ENCODE measurements at regions of chr10 and their contacts with region 1.

Region 1: DNA sequence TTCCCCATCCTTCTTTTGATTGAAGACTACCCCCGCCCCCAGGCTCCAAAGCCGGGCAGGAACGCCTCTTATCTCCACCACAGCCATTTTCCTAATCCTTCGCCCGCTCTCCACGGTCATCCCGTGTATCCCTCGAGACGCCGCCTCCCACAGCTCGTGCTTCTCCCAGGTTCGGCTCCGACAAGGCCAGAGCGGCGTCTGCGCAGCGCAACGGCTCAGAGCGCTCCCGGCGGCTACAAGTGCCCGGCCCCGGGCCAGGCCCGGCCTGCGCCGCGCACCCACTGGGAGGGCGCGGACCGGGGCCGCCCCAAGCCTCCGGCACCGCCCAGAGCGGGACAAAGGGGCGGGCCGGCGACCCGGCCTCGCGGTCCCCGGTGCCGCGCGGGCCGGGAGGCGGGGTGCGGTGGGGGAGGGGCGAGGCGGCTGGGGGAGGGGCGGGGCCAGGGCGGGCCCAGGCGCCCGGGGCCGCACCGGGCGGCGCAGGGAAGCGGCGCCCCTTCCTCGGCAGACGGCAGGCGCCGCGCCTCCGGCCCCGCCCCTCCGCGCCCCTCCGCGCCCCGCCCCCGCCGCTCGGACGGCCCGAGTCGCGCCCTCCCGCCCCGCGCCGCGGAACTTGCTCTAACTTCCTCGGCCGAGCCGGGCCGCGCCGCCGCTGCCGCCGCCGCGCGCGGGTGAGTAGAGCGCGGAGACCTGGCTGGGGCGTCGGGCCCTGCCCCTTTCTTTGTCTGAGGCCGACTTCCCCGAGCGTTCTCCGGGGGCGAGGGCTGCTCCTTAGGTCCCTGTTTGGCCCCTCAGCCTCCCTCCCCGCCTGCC is at the start of gene TSPAN14:
- DNase-seq: peak; percentile 83 to 90
- ATAC-seq: peak; percentile 86 to 95 (median 90)
- H3K4me3 ChIP-seq: peak within 1 kb of the TSS; percentile 76 to 99 (median 95)
- H3K27ac ChIP-seq: peak within 1 kb of the TSS; percentile 95 to 100 (median 100)
- H3K4me1 ChIP-seq: peaks cover 7 to 66% (median 48%) of the 10 kb centered on the region in 9 donors
- H3K27me3 ChIP-seq: no peaks in the 10 kb centered on the region
- CTCF ChIP-seq: no peak
- total RNA-seq, gene TSPAN14: 21.7 to 57.2 (median 27.6) TPM

Region 2: DNA sequence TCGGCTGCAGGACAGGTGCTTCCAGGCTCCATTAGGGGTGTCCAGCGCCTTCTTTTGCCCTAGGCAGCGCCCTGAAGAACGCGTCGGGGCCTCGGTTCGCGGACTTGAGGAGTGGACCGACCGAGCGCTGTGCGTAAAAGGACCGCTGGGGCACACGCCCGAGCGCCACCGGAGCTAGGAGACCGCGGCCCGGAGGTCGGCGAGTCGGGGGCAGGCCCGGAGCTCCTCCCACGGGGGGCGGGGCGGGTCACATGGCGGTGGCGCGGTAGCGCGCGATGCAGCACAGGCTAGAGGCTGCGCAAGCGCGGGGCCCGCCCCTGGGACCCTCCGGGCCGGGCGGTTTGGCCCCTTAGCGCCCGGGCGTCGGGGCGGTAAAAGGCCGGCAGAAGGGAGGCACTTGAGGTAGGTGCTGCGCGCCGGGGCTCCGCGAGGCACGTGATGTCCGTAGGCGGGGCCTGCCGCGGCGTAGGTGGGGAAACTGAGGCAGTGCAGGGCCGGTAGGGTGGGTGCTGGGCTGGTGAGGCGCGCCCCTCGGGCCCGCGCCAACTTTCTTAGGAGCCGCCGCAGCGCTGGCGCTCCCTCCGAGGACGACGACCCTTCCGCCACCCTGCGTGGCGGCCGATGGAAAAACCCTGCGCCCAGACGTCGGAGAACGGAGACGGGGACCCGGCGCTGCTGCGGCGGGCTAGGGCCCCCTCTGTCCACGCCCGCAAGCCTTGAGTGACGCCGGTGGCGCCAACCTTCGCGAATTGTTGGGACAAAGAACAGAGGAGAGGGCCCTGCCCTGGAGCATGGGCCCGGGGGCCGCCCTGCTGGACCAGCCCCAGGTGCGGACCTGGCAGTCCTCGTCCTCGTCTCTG is 45.4 kb before region 1 on chr10 and contains the start of gene PRXL2A:
- intact Hi-C with region 1: loop called in 2 of 10 experiments (anchors 5 kb)
- DNase-seq: peak; percentile 87 to 92
- ATAC-seq: peak; percentile 90 to 95 (median 94)
- H3K4me3 ChIP-seq: peak within 1 kb of the TSS; percentile 51 to 94 (median 84)
- H3K27ac ChIP-seq: peak within 1 kb of the TSS; percentile 59 to 93 (median 86)
- H3K4me1 ChIP-seq: peaks cover 5 to 71% (median 53%) of the 10 kb centered on the region in 9 donors
- H3K27me3 ChIP-seq: peaks cover 0 to 9% (median 0%) of the 10 kb centered on the region in 7 donors
- CTCF ChIP-seq: peak in 2 of 9 donors; percentile 8 to 14
- total RNA-seq, gene PRXL2A: 57.3 to 135 (median 84.3) TPM

Region 3: DNA sequence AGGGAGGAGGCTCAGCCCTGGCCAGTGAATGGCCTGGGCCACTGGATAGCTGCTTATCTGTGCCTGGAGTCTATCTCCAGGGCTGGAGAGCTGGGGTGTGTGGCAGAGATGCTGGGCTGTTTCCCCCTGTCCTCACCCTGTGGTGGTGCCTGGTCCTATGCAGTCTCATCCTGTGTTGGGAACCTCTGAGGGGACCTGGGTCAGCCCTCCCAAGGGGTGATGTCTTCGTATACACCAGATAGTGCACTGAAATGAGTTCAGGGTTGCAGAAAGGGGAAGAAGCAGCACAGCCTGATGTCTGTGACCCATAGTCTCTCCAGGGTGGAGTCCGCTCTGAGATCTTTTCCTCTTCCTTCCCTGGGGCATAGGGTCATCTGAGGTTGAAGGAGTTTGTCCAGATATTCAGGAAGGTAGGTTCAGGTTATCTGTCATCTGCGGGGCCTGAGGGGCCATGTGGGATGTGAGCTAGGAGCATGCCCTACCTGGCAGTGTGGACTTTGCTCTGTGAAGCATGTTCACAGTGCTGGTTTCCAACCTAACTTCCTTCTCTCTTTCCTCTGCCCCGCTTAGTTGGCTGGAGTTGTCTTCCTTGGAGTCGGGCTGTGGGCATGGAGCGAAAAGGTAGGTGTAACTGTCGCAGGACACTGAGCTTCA is 50.4 kb after region 1 on chr10:
- intact Hi-C with region 1: loop called in 4 of 10 experiments (anchors 2 to 5 kb)
- DNase-seq: no peak
- ATAC-seq: peak in 6 of 8 donors; percentile 5 to 29 (median 18)
- H3K4me3 ChIP-seq: peak overlapping the region in 1 of 10 donors; percentile 1
- H3K27ac ChIP-seq: peak overlapping the region; percentile 6 to 92 (median 79)
- H3K4me1 ChIP-seq: peaks cover 46 to 100% (median 98%) of the 10 kb centered on the region in 9 donors
- H3K27me3 ChIP-seq: no peaks in the 10 kb centered on the region
- CTCF ChIP-seq: no peak

Region 4: GRCh38 chr10:80612261-80612660 is 158.4 kb after region 1 on chr10:
- intact Hi-C with region 1: no loop called
- DNase-seq: no peak
- ATAC-seq: peak in 2 of 8 donors; percentile 47 to 75
- H3K4me3 ChIP-seq: no peak overlapping the region
- H3K27ac ChIP-seq: no peak overlapping the region
- H3K4me1 ChIP-seq: peaks cover 0 to 5% (median 0%) of the 10 kb centered on the region in 9 donors
- H3K27me3 ChIP-seq: peaks cover 0 to 4% (median 0%) of the 10 kb centered on the region in 7 donors
- CTCF ChIP-seq: no peak

Measured in heart right ventricle (tissue), 16 donors.